ENCODE measurements at regions of chr9 and their contacts with region 1.

Region 1: DNA sequence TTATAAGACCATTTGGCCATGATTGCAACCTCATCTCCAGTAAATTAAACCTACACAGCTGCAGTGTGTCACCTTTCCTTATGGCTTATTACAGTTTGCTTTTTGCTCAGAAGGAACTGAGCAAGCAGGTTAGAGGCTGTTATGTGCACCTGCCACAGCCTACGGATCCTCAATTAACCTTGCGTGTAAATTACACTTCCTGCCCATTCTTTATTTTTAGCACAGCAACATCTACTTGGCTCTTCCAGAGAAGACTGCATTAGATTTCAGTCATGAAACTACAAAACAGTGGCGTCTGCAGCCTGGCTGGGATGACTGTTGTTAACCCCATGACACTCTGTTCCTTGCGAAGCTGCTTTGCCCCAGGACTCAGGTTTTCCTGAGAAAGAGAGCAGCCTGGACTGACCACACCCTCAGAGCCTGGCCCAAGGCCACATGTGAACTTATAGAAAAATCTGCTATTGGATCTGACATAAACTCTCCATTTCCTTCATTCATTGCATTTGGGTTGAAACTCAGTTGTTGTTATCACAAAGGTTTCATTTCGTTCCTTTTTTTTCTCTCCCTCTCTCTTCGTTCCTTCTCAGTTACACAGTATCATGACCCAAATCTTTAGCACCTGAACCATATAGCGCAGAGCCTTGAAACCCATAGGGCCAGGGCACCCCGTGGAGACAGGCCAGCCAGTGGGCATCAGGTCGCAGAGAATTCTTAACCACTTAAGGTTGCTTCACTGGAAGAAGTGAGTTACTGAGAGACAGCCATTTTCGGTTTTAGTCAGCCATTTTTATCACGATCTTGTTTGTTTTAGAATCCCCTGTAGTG is 138.6 kb downstream of the PALM2AKAP2 start:
- DNase-seq: peak in 6 of 9 donors; percentile 7 to 55 (median 18)
- ATAC-seq: no peak
- H3K4me3 ChIP-seq: peak overlapping the region; percentile 20
- H3K4me3 Mint-ChIP-seq: peak overlapping the region; percentile 37 to 88 (median 65)
- H3K27ac ChIP-seq: no peak overlapping the region
- H3K27ac Mint-ChIP-seq: peak overlapping the region; percentile 2 to 96 (median 60)
- H3K4me1 ChIP-seq: peaks cover 0 to 14% of the 10 kb centered on the region in 2 donors
- H3K4me1 Mint-ChIP-seq: peaks cover 9 to 56% (median 22%) of the 10 kb centered on the region in 7 donors
- H3K27me3 ChIP-seq: no peaks in the 10 kb centered on the region
- H3K27me3 Mint-ChIP-seq: peaks cover 0 to 5% (median 0%) of the 10 kb centered on the region in 5 donors

Region 2: GRCh38 chr9:109705515-109705914 is 213.0 kb before region 1 on chr9:
- CTCF ChIA-PET with region 1: no interaction called
- POLR2A ChIA-PET with region 1: no interaction called
- intact Hi-C with region 1: no loop called
- DNase-seq: no peak
- ATAC-seq: no peak
- H3K4me3 ChIP-seq: no peak overlapping the region
- H3K4me3 Mint-ChIP-seq: no peak overlapping the region
- H3K27ac ChIP-seq: no peak overlapping the region
- H3K27ac Mint-ChIP-seq: no peak overlapping the region
- H3K4me1 ChIP-seq: no peaks in the 10 kb centered on the region
- H3K4me1 Mint-ChIP-seq: no peaks in the 10 kb centered on the region
- H3K27me3 ChIP-seq: no peaks in the 10 kb centered on the region
- H3K27me3 Mint-ChIP-seq: peaks cover 0 to 19% (median 8%) of the 10 kb centered on the region in 5 donors

Region 3: DNA sequence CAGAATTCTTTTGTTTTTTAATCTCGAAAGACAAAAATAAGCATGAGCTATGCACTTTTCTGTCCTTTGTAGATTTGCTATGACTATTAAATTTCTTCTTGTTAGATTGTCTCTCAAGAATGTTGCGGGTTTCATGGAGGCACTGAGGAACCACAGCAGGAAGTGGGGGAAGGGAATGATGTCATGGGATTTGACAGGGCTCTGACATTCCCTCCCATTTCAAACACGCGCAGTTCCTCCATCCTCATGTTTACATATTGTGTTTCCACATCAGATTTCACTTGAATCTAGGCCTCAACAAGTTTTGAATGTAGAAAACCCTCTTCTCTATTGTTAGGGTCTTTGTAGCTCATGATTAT is 16.3 kb after region 1 on chr9:
- CTCF ChIA-PET with region 1: interaction called, 3 read pairs
- POLR2A ChIA-PET with region 1: interaction called, 5 read pairs
- intact Hi-C with region 1: loop called in 1 of 2 experiments (anchors 2 kb)
- DNase-seq: no peak
- ATAC-seq: no peak
- H3K4me3 ChIP-seq: no peak overlapping the region
- H3K4me3 Mint-ChIP-seq: no peak overlapping the region
- H3K27ac ChIP-seq: no peak overlapping the region
- H3K27ac Mint-ChIP-seq: peak overlapping the region in 5 of 9 donors; percentile 1 to 67 (median 46)
- H3K4me1 ChIP-seq: peaks cover 0 to 16% of the 10 kb centered on the region in 2 donors
- H3K4me1 Mint-ChIP-seq: peaks cover 14 to 48% (median 34%) of the 10 kb centered on the region in 7 donors
- H3K27me3 ChIP-seq: no peaks in the 10 kb centered on the region
- H3K27me3 Mint-ChIP-seq: peaks cover 0 to 8% (median 0%) of the 10 kb centered on the region in 5 donors

Region 4: GRCh38 chr9:109953813-109954497 is 35.4 kb after region 1 on chr9:
- CTCF ChIA-PET with region 1: no interaction called
- POLR2A ChIA-PET with region 1: no interaction called
- intact Hi-C with region 1: loop called in 1 of 2 experiments (anchors 5 kb)
- DNase-seq: no peak
- ATAC-seq: no peak
- H3K4me3 ChIP-seq: no peak overlapping the region
- H3K4me3 Mint-ChIP-seq: no peak overlapping the region
- H3K27ac ChIP-seq: no peak overlapping the region
- H3K27ac Mint-ChIP-seq: no peak overlapping the region
- H3K4me1 ChIP-seq: no peaks in the 10 kb centered on the region
- H3K4me1 Mint-ChIP-seq: peaks cover 14 to 46% (median 28%) of the 10 kb centered on the region in 7 donors
- H3K27me3 ChIP-seq: no peaks in the 10 kb centered on the region
- H3K27me3 Mint-ChIP-seq: peaks cover 0 to 9% (median 5%) of the 10 kb centered on the region in 5 donors

Region 5: DNA sequence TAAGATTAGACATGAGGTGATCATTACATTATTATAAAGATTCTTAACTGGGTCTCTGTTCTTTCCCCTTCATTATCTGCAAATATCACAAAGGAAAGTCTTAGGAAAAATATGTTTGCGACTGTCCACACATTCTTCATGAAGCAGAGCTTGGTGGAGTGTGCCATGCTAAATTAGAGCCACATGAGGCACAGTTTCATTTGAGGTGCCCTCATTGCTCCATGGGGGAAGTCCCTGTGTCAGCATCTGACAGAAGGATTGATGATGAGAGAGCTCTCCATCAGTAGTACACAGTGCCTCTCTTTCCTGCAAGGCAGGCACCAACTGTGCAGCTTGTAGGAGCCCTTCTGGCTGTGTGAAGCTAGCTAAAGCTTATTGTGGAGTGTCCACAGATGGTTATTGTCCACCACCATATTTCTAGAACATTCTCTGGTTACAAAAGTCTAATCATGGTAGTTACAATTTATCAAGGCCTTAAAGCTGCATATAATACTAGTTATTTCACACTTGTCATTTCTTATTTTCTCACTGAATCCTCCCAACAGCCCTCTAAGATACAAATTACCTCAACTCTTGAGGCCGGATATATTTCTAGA is 225.5 kb after region 1 on chr9:
- CTCF ChIA-PET with region 1: no interaction called
- POLR2A ChIA-PET with region 1: no interaction called
- intact Hi-C with region 1: no loop called
- DNase-seq: peak in 5 of 9 donors; percentile 18 to 48 (median 25)
- ATAC-seq: peak; percentile 87
- H3K4me3 ChIP-seq: no peak overlapping the region
- H3K4me3 Mint-ChIP-seq: peak overlapping the region in 5 of 10 donors; percentile 8 to 75 (median 43)
- H3K27ac ChIP-seq: no peak overlapping the region
- H3K27ac Mint-ChIP-seq: peak overlapping the region in 8 of 9 donors; percentile 22 to 94 (median 80)
- H3K4me1 ChIP-seq: peaks cover 10 to 17% of the 10 kb centered on the region in 2 donors
- H3K4me1 Mint-ChIP-seq: peaks cover 21 to 71% (median 41%) of the 10 kb centered on the region in 7 donors
- H3K27me3 ChIP-seq: no peaks in the 10 kb centered on the region
- H3K27me3 Mint-ChIP-seq: no peaks in the 10 kb centered on the region

Measured in naive thymus-derived CD4-positive, alpha-beta T cell (primary cell).